Cardiac septum (tissue), 1 donor: ENCODE measurements at regions of chr5 and their contacts with region 1.

Region 1: GRCh38 chr5:95822542-95823181 is at the start of gene GLRX:
- DNase-seq: peak; percentile 89
- total RNA-seq, gene GLRX: 119 TPM

Region 2: DNA sequence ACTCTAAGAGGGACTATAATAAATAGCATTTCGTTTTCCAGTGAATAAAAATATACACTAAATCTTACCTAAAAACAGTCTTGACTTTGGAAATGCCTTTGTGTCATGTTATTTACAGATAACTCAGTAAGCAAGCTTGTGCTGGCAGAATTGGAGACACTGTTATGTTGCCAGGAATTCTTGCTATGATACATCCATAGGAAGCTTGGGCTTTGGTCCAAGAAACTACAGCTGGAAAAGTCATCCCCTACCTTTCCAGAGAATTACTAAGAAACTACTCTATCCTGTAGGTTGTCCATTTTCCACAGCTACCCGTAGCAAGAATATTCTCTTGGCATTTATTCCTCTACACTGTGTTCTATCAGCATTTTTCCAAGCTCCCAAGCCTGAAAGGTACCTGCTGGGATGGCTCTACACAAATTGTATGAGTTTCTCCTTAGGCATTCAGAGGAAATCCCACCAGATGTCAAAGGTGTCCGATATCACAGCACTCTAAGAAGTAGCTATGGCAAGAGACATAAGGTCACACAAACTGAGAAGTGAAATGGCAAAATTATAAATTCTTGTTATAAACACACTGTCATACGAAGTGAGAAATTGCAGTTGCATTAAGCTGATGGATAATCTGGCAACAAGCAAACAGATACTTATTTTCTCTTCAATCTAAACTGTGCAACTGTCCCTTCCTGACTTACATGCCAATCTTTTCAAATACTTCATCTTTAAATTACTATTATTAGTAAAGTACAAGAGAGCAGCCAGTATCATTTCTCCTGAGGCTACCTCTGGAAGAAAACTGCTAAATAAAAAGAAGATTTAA is 606.3 kb before region 1 on chr5:
- intact Hi-C with region 1: no loop called
- DNase-seq: no peak

Region 3: DNA sequence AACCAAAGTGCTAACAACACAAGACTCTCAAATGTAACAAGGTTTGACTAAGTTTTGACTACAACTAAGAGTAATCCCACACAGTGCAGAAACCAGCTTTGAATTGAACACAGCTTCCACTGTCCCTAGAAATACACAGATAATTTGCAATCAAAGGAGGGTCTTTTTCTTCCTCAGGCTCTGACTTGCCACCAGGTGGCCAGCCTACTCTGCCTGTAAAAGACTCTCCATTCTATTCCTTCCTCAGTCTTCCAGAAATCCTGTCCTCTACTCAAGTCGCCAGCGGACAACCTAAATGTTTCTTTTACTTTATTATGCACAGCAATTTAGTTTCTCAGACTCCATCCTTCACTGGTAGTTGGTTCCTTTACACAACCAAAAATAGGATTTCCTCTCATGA is 505.6 kb before region 1 on chr5:
- intact Hi-C with region 1: no loop called
- DNase-seq: no peak

Region 4: GRCh38 chr5:95730730-95731570 is 91.7 kb before region 1 on chr5 and contains the start of gene RHOBTB3:
- intact Hi-C with region 1: loop called (anchors 5 kb)
- DNase-seq: peak; percentile 93
- total RNA-seq, gene RHOBTB3: 79.0 TPM

Region 5: DNA sequence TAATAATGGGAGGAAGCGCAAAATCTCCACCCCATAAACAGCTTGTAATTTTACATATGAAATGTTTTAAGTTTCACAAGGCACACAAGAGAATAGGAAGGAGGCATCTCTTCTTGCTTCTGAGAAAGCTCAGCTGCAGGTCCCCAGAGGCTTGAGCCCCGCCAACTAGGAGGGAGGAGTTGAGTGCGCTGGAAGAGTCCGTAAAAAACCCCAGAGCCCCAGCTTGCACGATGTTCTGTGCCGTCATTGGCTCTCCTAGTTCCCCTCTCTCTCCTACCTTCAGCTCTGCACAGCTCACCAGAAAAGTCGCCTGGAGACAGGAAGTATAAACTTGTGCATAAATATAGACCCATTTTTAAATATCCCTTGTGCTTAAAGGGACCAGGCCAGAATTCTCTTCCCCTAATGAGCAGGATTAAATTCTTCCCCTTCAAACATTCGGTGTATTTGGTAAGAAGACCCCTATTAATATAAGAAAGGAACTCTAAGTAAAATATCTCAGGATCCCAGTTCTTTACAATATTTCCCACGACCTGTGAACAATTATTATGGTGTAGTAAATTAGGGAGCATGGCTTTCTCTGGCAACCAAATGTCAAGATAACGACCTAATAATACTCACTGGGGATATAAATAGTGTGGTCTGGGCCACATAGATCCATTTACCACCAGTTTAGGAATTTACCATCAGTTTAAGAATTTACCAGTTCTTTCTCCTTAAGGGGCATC is 13.8 kb before region 1 on chr5:
- intact Hi-C with region 1: loop called (anchors 1 kb)
- DNase-seq: peak; percentile 87

Region 6: DNA sequence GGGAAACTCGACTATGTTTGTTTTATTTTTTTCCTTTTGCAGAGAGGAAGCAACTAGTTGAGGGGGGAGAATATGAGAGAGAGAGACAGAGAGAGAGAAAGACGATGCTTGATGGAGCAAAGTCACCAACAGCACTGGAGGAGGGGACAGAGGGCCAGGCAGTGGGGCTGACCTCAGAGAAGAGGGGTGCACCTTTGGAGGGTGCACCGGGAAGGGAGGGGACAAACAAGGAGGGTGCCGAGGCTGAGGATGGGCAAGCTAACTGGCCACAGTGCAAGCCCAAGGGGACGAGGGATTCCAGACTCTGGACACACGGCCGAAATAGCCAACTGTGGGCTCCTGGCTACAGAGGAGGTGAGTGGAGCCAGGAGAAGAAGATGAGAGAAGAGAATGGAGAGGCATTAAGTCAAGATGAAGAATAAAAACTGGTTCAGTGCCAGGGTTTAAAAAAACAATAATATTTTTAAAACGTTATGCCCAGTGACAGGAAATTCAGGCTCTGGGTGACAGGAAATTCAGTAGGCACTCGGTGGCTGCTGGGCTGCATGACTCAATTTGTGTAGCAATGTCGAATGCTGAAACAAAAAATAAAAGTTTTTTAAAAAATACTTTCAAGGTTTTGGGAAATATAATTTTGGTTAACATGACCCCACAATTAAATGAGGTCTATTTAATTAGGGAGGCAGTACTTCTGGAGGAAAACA is 13.2 kb after region 1 on chr5:
- intact Hi-C with region 1: loop called (anchors 2 kb)
- DNase-seq: no peak